Left colon (tissue), 2 donors: ENCODE measurements at regions of chr5 and their contacts with region 1.

Region 1: DNA sequence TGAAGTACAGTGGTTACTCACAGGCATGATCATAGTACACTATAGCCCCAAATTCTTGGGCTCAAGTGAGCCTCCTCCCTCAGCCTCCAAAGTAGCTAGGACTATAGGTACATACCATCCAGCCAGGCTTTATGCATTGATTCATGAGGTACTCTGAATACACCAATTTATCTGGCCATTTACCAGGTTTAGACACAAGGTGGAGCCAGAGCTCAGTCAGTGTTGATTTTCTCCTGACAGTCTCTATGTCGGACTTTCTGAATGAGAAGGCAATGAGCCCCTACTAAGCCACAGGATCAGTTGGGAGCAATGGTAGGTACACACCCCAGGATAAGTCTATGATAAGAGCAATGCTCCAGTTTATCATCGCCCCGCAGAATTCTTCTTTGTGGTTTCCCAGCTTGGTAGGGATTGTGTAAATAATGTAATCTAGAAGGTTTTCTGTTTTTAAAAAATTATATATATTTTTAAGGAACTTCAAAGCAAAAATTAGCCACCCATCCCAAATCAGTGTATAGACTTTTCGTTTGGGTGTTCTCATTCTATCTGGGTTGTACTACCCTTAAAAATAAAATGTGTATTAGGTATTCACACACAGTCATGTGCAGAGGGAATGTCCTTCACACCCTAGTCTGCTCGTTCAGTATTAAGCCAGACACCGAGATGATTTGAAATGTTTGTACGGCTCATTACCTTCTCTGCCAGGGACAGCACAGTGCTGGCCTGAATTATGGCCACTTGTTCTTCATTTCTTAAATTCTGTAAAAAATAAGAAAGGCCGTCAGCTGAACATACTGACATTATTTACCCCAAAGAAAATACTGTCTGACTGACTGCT is 118.4 kb upstream of the DPYSL3 start:
- DNase-seq: peak in 1 of 2 donors; percentile 53
- ATAC-seq: peak; percentile 82

Region 2: GRCh38 chr5:147464211-147464610 is 164.1 kb before region 1 on chr5:
- intact Hi-C with region 1: no loop called
- DNase-seq: no peak
- ATAC-seq: no peak

Region 3: DNA sequence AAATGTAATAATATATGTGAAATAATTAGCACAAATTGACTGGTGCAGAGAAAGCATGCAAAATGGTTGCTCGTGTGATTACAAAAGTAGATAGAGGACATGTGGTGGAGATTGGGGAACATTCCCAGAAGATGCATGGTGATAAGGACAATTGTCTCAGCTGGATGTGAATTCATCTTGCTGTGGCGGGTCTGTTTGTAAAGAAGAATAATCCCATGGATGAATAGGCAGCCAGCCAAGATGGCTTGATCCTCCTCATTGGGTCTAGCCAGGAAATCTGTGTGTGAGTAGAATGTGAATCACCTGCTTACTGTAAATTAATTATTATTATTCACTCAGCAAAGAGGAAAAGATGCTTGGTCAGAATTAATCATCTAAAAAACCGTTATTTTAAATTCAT is 105.8 kb before region 1 on chr5:
- intact Hi-C with region 1: no loop called
- DNase-seq: no peak
- ATAC-seq: no peak

Region 4: GRCh38 chr5:147822686-147823491 is 194.6 kb after region 1 on chr5:
- intact Hi-C with region 1: loop called (anchors 2 to 10 kb)
- DNase-seq: peak in 1 of 2 donors; percentile 15
- ATAC-seq: peak; percentile 91